Breast epithelium (tissue), 4 donors: ENCODE measurements at regions of chr17 and their contacts with region 1.

Region 1: GRCh38 chr17:50817838-50818237 is 17.5 kb upstream of the WFIKKN2 start:
- DNase-seq: no peak
- H3K4me3 ChIP-seq: no peak overlapping the region
- H3K27ac ChIP-seq: peak overlapping the region in 1 of 2 donors; percentile 27
- H3K4me1 ChIP-seq: no peaks in the 10 kb centered on the region
- H3K27me3 ChIP-seq: no peaks in the 10 kb centered on the region
- CTCF ChIP-seq: no peak
- POLR2A ChIP-seq: no peak

Region 2: GRCh38 chr17:49764559-49765180 is 1053.2 kb before region 1 on chr17:
- intact Hi-C with region 1: no loop called
- DNase-seq: no peak
- H3K4me3 ChIP-seq: peak overlapping the region; percentile 59 to 95 (median 82)
- H3K27ac ChIP-seq: peak overlapping the region; percentile 11 to 79
- H3K4me1 ChIP-seq: peaks cover 0 to 5% of the 10 kb centered on the region in 2 donors
- H3K27me3 ChIP-seq: no peaks in the 10 kb centered on the region
- CTCF ChIP-seq: no peak
- POLR2A ChIP-seq: no peak

Region 3: GRCh38 chr17:50794361-50794760 is 23.5 kb before region 1 on chr17:
- intact Hi-C with region 1: loop called (anchors 1 kb)
- DNase-seq: no peak
- H3K4me3 ChIP-seq: no peak overlapping the region
- H3K27ac ChIP-seq: no peak overlapping the region
- H3K4me1 ChIP-seq: no peaks in the 10 kb centered on the region
- H3K27me3 ChIP-seq: no peaks in the 10 kb centered on the region
- CTCF ChIP-seq: no peak
- POLR2A ChIP-seq: no peak